Breast epithelium (tissue), 4 donors: ENCODE measurements at regions of chr19 and their contacts with region 1.

Region 1: DNA sequence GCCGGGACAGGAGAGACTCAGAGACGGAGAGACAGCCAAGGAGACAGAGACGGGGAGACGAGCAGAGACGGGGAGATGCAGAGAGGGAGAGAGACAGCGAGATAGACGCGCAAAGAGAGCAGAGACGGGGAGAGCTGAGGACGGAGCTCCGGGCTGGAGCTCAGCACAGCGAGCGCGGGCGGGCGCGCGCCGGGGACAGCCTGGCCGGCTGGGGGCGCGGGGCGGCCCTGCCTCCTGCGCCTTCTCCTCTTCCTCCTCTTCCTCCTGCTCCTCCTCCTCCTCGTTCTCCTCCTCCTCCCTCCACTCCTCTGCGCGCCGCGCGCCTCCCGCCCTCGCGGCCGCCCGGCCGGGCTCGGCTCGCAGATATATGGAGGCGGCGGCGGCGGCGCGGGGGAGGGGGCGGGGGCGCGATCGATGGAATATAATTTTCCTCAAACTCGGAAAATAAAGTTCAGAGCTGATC is at the start of gene ERFL:
- DNase-seq: no peak
- H3K4me3 ChIP-seq: peak within 1 kb of the TSS; percentile 26 to 64 (median 51)
- H3K27ac ChIP-seq: no peak within 1 kb of the TSS
- H3K4me1 ChIP-seq: peaks cover 0 to 7% of the 10 kb centered on the region in 2 donors
- H3K27me3 ChIP-seq: peaks cover 3 to 85% of the 10 kb centered on the region in 2 donors
- CTCF ChIP-seq: no peak
- POLR2A ChIP-seq: no peak
- total RNA-seq, gene ERFL: 0.15 TPM in 1 of 3 donors, not detected in the others

Region 2: DNA sequence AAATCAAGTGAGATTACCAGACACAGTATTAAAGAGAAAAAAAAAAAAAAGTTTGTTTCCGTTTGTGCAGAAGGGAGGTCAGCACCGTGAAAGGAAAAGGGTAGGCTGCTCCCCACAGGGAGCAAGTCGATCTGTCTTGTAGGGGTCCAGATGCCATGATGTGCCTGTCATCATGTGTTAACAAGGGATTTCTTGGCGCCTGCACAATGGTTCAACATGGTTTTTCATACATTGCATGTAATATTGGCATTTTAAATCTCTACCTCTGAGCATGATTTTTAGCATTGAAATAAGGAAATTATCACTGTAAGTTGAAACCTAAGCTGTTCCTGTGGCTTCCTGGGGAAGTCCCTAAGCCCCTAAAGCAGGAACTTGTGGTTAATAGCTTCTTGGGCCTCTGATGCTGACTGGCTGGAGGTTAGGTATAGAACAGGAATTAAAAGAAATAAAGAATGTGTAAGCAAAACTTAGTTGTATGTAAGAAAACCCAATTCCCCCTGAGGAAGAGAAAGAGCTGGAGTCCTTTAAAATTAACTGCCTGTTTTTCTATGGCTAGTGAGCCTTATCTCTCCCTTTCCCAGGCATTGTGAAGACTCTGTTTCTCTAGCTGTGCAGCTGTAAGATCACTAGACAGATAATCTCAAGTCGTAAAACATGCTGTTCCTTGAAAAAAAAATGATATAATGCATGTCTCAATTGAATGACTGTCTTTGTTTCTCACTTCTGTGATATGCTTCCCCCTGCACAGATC is 1986.5 kb before region 1 on chr19:
- intact Hi-C with region 1: no loop called
- DNase-seq: no peak
- H3K4me3 ChIP-seq: no peak overlapping the region
- H3K27ac ChIP-seq: no peak overlapping the region
- H3K4me1 ChIP-seq: no peaks in the 10 kb centered on the region
- H3K27me3 ChIP-seq: no peaks in the 10 kb centered on the region
- CTCF ChIP-seq: no peak
- POLR2A ChIP-seq: no peak

Region 3: DNA sequence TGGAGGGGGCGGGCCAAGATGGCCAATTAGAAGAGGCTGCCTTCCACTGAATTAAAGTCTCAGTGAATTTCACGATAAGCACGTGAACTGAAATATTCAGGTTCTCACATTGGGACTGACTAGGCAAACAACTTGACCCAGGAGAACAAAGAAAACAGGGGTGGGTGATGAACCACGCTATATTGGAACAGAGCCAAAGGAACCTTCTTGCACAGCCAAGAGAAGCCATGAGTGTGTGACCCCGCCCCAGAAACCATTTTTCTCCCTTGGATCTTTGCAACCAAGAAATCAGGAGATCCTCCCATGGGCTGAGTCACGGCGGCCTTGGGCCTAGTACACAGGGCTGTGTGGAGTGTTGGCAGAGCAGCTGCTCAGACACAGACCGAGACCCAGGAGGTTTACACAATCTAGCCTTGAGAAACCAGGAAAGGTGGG is 448.5 kb before region 1 on chr19:
- intact Hi-C with region 1: loop called (anchors 5 kb)
- DNase-seq: no peak
- H3K4me3 ChIP-seq: no peak overlapping the region
- H3K27ac ChIP-seq: peak overlapping the region; percentile 25 to 74
- H3K4me1 ChIP-seq: no peaks in the 10 kb centered on the region
- H3K27me3 ChIP-seq: peaks cover 0 to 3% of the 10 kb centered on the region in 2 donors
- CTCF ChIP-seq: no peak
- POLR2A ChIP-seq: no peak

Region 4: DNA sequence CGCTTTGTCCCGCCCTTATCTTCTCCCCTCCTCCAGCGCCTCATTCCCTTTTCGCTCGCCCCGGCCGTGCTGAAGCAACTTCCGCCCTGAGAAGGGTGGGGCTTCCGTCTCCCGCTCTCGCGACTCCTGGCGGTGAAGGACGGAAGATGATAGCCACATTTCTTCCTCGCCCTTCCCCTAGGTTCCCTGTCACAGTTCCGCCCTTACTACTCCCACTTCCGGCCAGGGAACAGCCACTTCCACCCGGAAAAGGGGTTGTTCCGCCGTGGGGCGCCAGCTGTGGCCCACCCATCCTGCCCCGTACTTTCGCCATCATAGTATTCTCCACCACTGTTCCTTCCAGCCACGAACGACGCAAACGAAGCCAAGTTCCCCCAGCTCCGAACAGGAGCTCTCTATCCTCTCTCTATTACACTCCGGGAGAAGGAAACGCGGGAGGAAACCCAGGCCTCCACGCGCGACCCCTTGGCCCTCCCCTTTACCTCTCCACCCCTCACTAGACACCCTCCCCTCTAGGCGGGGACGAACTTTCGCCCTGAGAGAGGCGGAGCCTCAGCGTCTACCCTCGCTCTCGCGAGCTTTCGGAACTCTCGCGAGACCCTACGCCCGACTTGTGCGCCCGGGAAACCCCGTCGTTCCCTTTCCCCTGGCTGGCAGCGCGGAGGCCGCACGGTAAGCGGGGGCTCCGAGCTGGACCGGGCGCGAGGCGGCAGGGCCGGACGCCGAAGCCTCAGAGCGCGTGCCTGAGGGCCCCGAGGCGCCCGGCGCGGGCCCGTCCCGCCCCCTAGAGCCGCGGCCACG is 68.4 kb before region 1 on chr19 and contains the start of gene RPS19:
- intact Hi-C with region 1: no loop called
- DNase-seq: peak; percentile 98
- H3K4me3 ChIP-seq: peak within 1 kb of the TSS; percentile 86 to 98 (median 92)
- H3K27ac ChIP-seq: peak within 1 kb of the TSS; percentile 96 to 99
- H3K4me1 ChIP-seq: peaks cover 12 to 23% of the 10 kb centered on the region in 2 donors
- H3K27me3 ChIP-seq: no peaks in the 10 kb centered on the region
- CTCF ChIP-seq: peak; percentile 90 to 96 (median 96)
- POLR2A ChIP-seq: peak; percentile 54
- total RNA-seq, gene RPS19: 756 to 2,084 (median 1,264) TPM

Region 5: DNA sequence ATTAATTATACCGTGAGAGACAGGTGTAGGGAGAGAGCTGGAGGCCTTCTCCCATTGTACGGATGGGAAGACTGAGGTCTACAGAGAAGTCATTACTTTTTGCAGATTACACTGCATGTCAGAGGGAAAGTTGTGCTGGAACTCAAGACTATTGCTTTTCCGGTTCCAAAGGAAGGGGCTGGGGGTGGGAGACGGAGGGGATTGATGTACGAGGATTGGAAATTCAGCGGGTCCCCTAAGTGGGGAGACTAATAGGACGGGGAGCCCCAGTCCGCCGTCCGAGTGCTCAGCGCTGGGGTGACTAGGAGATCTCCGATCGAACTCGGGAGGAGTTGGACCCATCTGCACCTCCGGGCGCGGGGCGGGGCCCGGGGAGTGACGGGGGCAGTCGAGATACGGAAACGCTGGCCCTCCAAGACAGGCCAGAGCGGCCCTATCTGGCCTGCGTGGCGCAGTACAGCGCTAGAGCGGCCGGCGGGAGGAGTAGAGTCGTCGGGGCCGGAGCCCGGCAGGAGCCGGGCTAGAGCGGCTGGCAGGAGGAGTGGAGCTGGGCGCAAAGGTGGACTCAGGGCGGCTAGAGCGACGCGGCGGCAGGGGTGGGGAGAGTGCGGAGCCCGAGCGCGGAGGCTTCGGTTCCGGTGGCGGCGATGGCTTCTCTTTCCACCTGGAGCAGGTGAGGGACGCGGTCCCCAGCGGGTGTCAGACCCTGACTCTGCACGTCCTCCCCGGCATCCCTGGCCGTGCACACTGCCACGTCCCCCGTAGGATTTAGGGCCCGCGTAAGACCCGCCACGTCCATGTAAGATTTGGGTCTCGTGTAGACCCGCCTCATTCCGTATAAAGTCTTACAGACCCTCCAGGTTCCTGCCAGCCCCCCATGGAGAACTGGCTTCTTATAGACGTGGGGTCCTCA is 44.2 kb before region 1 on chr19:
- intact Hi-C with region 1: loop called (anchors 1 kb)
- DNase-seq: peak; percentile 93 to 94
- H3K4me3 ChIP-seq: peak overlapping the region; percentile 87 to 96 (median 94)
- H3K27ac ChIP-seq: peak overlapping the region; percentile 87 to 90
- H3K4me1 ChIP-seq: peaks cover 0 to 6% of the 10 kb centered on the region in 2 donors
- H3K27me3 ChIP-seq: no peaks in the 10 kb centered on the region
- CTCF ChIP-seq: no peak
- POLR2A ChIP-seq: peak; percentile 20

Region 6: GRCh38 chr19:41892173-41892902 is 35.9 kb before region 1 on chr19:
- intact Hi-C with region 1: loop called (anchors 1 kb)
- DNase-seq: no peak
- H3K4me3 ChIP-seq: no peak overlapping the region
- H3K27ac ChIP-seq: no peak overlapping the region
- H3K4me1 ChIP-seq: no peaks in the 10 kb centered on the region
- H3K27me3 ChIP-seq: no peaks in the 10 kb centered on the region
- CTCF ChIP-seq: no peak
- POLR2A ChIP-seq: no peak

Region 7: GRCh38 chr19:41904118-41904870 is 24.0 kb before region 1 on chr19:
- intact Hi-C with region 1: no loop called
- DNase-seq: peak in 1 of 2 donors; percentile 73
- H3K4me3 ChIP-seq: no peak overlapping the region
- H3K27ac ChIP-seq: no peak overlapping the region
- H3K4me1 ChIP-seq: no peaks in the 10 kb centered on the region
- H3K27me3 ChIP-seq: no peaks in the 10 kb centered on the region
- CTCF ChIP-seq: no peak
- POLR2A ChIP-seq: no peak